Activated B cell treated with CpG ODN at 0.5 μM for 24 hours (primary cell): ENCODE measurements at regions of chr6 and their contacts with region 1.

Region 1: DNA sequence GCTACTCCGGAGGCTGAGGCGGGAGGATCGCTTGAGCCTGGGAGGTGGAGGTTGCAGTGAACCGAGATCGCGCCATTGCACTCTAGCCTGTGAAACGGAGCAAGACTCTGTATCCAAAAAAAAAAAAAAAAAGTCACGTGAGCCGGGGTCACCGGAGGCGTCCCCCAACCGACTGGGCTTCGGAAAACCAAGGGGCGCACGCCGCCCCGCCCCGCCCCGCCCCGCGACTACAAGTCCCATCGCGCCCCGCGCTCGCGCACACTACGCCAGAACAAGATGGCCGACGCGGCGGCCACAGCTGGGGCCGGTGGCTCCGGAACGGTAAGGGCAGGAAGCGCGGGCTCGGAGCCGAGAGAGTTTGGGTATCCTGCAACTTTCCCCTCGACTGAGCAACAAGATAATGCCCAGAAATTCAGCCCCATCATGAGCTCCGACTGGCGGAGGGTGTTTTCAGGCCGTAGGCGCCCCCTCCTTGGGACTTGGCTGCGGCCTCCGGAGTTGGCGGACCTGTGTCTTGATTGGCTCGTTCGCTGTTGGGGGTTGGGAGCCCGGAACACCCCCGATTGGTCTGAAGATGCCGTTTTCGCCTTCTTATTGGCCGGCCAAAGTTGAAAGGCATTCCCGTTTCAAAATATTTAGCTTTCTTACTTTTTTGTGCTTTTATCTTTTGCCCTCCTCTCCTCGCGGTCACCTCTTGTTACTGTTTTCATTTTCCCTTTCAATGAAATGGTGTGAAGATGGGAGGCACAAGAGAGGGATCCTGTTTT is at the start of gene TAF8:
- DNase-seq: peak; percentile 81
- ATAC-seq: peak; percentile 74
- H3K4me3 Mint-ChIP-seq: peak within 1 kb of the TSS; percentile 96
- H3K27ac Mint-ChIP-seq: peak within 1 kb of the TSS; percentile 99
- H3K4me1 Mint-ChIP-seq: peaks cover 54% of the 10 kb centered on the region
- H3K27me3 Mint-ChIP-seq: no peaks in the 10 kb centered on the region
- CTCF ChIP-seq: no peak
- total RNA-seq, gene TAF8: 47.2 and 55.7 TPM in 2 replicates

Region 2: DNA sequence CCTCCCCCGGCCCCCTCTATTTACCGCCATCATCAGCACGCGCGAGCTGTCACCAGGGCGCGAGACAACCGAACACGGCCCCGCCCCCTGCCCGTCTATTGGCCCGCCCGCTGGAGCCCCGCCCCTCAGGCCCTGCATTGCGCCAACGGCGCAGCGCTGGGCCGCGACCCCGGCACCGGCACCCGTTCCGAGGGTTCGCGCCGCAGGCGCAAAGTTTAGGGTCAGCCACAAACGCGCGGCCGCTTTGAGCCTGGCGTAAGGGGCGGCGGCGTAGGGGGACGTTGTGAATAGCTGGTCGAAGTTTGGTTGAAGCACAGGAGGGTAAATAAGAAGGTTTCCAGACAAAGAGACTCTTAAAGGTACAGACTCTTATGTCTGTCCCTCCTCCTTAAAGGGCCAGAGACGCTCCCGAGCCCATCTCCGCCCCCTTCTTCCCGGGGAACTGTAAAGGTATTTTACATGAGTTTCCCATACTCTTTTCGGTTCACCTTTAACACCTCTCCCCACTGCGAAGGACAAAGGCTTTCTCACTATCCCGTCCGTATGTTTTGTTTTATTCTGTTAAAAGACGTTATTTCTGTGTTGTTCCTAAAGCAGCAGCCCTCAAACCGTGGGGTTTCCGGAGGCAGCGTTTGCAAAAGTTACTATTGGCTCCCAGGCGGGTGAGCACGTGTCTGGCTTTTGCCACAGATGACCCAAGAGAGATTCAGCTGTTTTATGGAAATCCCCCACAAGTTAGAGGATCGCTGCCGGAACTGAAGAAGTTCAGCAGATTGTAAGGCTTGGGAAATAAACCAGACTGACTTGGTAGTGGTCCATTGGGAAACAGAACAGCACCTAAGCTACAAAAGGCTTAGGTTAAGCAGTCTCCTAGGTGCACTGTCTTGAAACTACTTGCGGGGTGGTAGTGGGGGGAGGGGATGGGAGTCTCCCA is 154.9 kb before region 1 on chr6 and contains the start of gene USP49:
- CTCF ChIA-PET with region 1: interaction called, 13 read pairs
- POLR2A ChIA-PET with region 1: interaction called, 60 read pairs
- intact Hi-C with region 1: loop called (anchors 1 kb)
- DNase-seq: peak; percentile 90
- ATAC-seq: peak; percentile 92
- H3K4me3 Mint-ChIP-seq: no peak within 1 kb of the TSS
- H3K27ac Mint-ChIP-seq: peak within 1 kb of the TSS; percentile 95
- H3K4me1 Mint-ChIP-seq: peaks cover 14% of the 10 kb centered on the region
- H3K27me3 Mint-ChIP-seq: no peaks in the 10 kb centered on the region
- CTCF ChIP-seq: no peak
- total RNA-seq, gene USP49: 7.7 and 8.0 TPM in 2 replicates

Region 3: DNA sequence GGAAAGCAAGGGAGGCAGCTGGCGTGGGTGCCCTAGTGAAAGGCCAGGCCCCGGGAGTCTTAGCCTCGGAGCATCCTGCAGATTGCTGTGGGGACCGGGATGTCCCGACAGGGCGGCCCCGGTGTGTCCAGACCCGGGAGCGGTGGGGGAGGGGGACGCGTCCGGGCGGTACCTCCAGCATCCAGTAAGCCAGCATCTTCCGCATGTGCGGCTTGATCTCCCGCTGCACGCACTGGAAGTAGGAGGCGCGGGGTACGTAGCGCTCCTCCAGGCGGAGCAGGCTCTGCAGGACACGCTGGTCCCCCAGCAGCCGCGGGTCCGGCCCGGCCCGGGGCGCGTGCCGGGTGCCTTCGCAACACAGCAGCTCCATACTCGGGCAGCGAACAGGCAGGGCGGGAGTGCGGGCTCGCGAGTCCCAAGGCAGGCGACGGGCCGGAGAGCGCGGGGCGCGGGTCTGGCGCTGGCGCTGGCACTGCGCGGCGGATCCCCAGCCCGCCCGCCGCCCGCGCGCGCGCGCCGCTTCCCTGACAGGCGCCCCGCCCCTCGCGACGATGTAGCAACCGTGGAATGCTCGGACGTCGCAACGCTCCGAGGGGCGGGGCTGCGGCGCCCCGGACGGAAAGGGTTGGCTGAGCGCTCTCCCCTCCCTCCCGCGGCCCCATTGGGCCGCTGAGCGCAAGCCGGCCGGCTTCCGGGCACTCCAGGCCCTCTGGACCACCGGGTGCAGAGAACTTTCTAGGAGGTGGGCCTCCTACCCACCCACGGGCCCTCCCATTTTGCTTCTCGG is 109.0 kb before region 1 on chr6 and contains the start of gene CCND3:
- CTCF ChIA-PET with region 1: interaction called, 90 read pairs
- POLR2A ChIA-PET with region 1: interaction called, 195 read pairs
- intact Hi-C with region 1: no loop called
- DNase-seq: peak; percentile 85
- ATAC-seq: peak; percentile 92
- H3K4me3 Mint-ChIP-seq: peak within 1 kb of the TSS; percentile 90
- H3K27ac Mint-ChIP-seq: peak within 1 kb of the TSS; percentile 89
- H3K4me1 Mint-ChIP-seq: peaks cover 53% of the 10 kb centered on the region
- H3K27me3 Mint-ChIP-seq: no peaks in the 10 kb centered on the region
- CTCF ChIP-seq: no peak
- total RNA-seq, gene CCND3: 70.7 and 75.2 TPM in 2 replicates

Region 4: DNA sequence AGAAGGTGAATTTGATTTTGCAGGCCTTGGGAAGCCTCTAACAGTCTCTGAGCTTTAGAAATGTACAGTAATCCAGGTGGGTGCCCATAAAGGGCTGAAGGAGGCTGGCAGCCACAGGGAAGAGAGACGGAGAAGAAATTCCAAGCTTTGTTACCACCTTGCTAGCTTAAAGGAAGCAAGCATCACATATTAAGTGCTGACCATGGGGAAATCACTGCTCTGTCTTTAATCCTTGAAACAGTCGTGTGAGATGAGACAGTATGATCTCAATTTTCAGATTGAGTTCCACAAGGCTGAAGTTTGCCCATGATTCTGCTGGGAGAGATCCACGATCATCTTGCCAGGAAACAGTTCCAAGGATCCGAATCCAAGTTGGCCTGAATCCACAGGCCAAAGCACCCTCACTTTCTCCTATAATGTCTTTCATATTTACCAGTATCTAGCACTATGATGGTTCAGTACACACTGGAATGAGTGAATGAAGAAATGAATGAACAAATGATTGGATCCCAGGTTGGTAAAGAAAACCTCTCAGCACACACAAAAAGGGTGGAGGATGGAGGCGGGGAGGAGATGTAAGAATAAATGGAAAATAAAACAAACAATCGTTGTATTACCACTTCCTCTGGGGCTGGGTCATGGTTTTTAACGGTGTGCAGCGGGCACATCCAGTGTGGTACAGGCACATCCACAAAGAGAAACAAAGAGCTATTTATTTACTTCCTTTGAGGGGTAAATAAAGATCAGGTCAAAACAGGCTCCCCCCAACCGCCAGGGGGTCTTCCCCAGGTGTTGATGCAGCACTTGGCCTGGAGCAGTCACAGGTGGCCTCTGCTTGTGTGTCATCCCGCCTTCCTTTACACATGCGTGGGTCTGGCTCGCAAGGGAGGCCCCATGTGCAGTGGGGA is 28.3 kb before region 1 on chr6:
- CTCF ChIA-PET with region 1: interaction called, 3 read pairs
- POLR2A ChIA-PET with region 1: interaction called, 24 read pairs
- intact Hi-C with region 1: loop called (anchors 1 kb)
- DNase-seq: peak; percentile 58
- ATAC-seq: peak; percentile 38
- H3K4me3 Mint-ChIP-seq: peak overlapping the region; percentile 75
- H3K27ac Mint-ChIP-seq: peak overlapping the region; percentile 99
- H3K4me1 Mint-ChIP-seq: peaks cover 83% of the 10 kb centered on the region
- H3K27me3 Mint-ChIP-seq: no peaks in the 10 kb centered on the region
- CTCF ChIP-seq: no peak

Region 5: DNA sequence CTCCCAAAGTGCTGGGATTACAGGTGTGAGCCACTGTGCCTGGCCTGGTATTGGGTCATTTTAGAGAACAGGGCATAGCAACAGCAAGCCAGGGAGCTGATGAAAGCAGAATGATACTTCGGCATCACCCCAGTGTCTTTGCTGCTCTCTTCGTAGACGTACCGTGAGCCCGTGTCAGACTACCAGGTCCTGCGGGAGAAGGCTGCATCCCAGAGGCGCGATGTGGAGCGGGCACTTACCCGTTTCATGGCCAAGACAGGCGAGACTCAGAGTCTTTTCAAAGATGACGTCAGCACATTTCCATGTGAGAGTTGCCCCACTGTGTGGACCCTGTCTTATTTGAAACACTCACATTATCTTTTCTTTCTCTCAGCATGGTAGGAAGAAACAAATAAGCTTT is 15.7 kb after region 1 on chr6:
- CTCF ChIA-PET with region 1: no interaction called
- POLR2A ChIA-PET with region 1: interaction called, 11 read pairs
- intact Hi-C with region 1: no loop called
- DNase-seq: no peak
- ATAC-seq: no peak
- H3K4me3 Mint-ChIP-seq: no peak overlapping the region
- H3K27ac Mint-ChIP-seq: no peak overlapping the region
- H3K4me1 Mint-ChIP-seq: no peaks in the 10 kb centered on the region
- H3K27me3 Mint-ChIP-seq: no peaks in the 10 kb centered on the region
- CTCF ChIP-seq: no peak